Transverse colon (tissue), 4 donors: ENCODE measurements at regions of chr3 and their contacts with region 1.

Region 1: GRCh38 chr3:11803977-11804892 is 42.5 kb downstream of the TAMM41 start:
- DNase-seq: peak; percentile 26
- H3K4me3 ChIP-seq: no peak overlapping the region
- H3K27ac ChIP-seq: no peak overlapping the region
- H3K4me1 ChIP-seq: peaks cover 0 to 10% (median 2%) of the 10 kb centered on the region in 4 donors
- H3K27me3 ChIP-seq: no peaks in the 10 kb centered on the region
- CTCF ChIP-seq: peak; percentile 64 to 76 (median 73)
- EP300 ChIP-seq: no peak
- POLR2A ChIP-seq: no peak

Region 2: GRCh38 chr3:11379233-11379823 is 424.9 kb before region 1 on chr3:
- in situ Hi-C with region 1: loop called (anchors 10 to 25 kb)
- intact Hi-C with region 1: loop called (anchors 5 kb)
- DNase-seq: no peak
- H3K4me3 ChIP-seq: no peak overlapping the region
- H3K27ac ChIP-seq: peak overlapping the region in 3 of 4 donors; percentile 1 to 40 (median 37)
- H3K4me1 ChIP-seq: peaks cover 0 to 11% (median 3%) of the 10 kb centered on the region in 4 donors
- H3K27me3 ChIP-seq: no peaks in the 10 kb centered on the region
- CTCF ChIP-seq: peak; percentile 55 to 69 (median 58)
- EP300 ChIP-seq: no peak
- POLR2A ChIP-seq: no peak

Region 3: GRCh38 chr3:11385891-11386290 is 418.3 kb before region 1 on chr3:
- in situ Hi-C with region 1: loop called (anchors 10 to 25 kb)
- intact Hi-C with region 1: no loop called
- DNase-seq: no peak
- H3K4me3 ChIP-seq: no peak overlapping the region
- H3K27ac ChIP-seq: peak overlapping the region in 1 of 4 donors; percentile 58
- H3K4me1 ChIP-seq: peaks cover 10 to 26% (median 15%) of the 10 kb centered on the region in 4 donors
- H3K27me3 ChIP-seq: no peaks in the 10 kb centered on the region
- CTCF ChIP-seq: no peak
- EP300 ChIP-seq: no peak
- POLR2A ChIP-seq: no peak

Region 4: DNA sequence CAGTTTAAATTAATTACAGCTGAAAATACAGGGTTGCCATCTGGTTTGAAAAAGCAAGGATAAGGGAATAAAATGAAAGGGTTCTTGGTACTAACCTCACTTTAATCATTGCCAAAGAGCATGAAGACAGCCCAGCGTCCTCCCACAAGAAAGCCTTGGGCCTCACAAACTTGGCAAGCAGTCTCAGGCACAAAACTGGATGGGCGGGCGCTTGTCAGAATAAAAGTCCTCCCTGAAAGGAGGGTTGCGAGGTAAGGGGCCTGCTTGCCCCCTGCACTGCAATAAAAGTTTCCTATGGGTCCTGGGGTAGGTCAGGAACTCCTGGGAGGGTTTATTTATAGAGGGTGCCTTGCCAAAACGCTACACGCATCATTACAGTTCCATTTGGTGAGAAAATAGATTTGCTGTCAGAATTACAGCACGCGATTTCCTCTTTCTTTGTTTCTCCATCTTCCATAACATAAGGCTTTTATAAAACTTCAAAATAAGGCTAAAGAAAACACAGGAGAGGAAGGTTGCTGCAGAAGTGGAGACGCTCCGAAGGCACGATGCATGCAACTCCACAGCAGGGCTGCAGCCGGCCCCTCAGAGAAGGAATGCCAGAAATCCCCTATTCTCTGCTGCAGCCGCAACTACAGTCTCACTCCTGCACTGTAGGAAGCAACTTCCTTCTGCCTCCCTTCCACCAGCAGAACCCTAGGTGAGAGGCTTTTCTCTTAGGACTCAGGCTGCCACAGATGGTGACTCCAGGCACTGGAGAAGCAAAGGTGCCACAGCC is 221.9 kb before region 1 on chr3:
- in situ Hi-C with region 1: no loop called
- intact Hi-C with region 1: no loop called
- DNase-seq: peak; percentile 52
- H3K4me3 ChIP-seq: peak overlapping the region in 3 of 4 donors; percentile 6 to 36 (median 6)
- H3K27ac ChIP-seq: peak overlapping the region; percentile 67 to 86 (median 80)
- H3K4me1 ChIP-seq: peaks cover 25 to 52% (median 33%) of the 10 kb centered on the region in 4 donors
- H3K27me3 ChIP-seq: no peaks in the 10 kb centered on the region
- CTCF ChIP-seq: no peak
- EP300 ChIP-seq: no peak
- POLR2A ChIP-seq: no peak